T-cell (primary cell): ENCODE measurements at regions of chr14 and their contacts with region 1.

Region 1: DNA sequence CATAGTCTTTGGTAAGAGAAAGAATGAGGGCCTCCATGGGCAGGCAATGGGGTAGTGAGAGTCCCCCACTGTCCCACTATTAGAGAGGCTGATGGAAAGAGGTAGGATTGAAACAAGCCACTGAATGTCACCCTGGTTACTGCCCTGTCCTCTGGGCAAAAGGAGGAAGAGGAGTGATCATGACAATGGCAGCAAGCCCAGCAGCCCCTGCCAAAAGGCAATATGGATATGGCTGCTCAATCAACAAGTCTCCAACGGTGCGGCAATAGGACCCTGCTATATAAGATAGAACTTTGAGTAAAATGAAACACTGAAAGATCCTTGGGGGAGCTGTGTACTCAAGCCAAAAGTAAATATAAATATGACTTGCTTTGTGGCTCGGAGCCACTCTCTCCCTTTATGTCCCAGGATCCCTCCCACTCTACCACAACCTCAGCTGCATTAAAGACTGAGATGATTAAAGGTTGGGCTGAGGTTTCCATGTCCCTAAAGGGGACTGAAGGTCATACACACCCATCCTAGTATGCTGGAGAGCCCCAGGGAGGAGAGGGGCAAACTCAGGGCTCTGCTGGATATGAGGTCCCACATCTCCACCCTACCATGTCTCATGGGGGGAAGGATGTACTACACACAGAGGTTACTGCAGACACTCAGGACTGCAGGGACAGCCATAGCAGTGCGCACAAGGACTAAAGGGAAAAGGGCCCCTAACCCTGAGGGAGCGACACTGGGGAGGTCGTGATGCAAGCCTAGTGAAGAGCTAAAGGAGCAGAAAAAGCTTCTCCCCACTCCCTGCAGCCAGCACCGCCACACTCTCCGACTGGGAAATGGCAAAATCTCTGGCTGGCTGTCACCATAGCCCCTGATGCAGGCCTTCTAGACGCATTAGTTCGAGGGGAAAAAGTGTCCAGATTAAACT is 5.9 kb downstream of the POMT2 start:
- DNase-seq: no peak
- ATAC-seq: no peak
- H3K4me3 ChIP-seq: no peak overlapping the region
- H3K4me3 Mint-ChIP-seq: no peak overlapping the region
- H3K27ac ChIP-seq: no peak overlapping the region
- H3K27ac Mint-ChIP-seq: no peak overlapping the region
- H3K4me1 ChIP-seq: no peaks in the 10 kb centered on the region
- H3K4me1 Mint-ChIP-seq: peaks cover 1 to 5% (median 4%) of the 10 kb centered on the region in 3 donors
- H3K27me3 ChIP-seq: no peaks in the 10 kb centered on the region
- H3K27me3 Mint-ChIP-seq: no peaks in the 10 kb centered on the region

Region 2: DNA sequence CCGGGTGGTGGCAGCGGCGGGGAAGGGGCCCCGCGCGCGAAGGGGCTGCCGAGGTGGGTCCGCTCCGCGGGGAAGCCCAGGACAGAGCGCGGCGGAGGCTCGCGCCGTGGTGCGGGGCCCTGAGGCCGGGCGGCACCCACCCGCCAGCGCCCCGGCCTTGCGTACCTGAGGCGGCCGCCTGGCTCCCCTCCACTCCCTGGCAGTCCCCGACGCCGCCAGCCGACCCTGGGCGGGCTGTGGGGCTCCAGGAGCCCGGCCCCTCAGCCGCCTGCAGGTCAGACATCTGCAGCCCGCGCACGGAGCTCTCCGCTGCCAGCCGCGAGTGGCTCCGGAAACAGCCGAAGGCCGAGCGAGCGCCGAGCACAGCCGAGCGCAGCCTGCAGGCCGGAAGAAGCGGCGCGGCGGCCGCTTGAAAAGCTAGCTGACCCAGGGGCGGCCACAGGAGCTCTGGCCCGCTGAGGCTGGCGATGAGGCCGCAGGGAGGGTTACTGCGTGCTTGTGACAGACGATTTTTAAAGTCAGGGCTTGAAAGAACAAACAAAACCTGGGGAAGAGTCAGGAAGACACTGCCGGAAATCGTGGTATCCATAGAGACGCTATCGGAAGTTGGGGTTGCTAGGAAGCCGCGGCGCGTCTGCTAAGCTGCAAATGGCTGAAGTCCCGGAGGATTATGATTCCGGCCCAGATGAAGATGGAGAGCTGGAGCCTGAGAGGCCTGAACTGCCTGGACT is 62.1 kb after region 1 on chr14 and contains the starts of genes SAMD15 and TMED8:
- CTCF ChIA-PET with region 1: interaction called, 4 to 12 read pairs
- POLR2A ChIA-PET with region 1: no interaction called
- DNase-seq: peak; percentile 69 to 91 (median 81)
- ATAC-seq: peak; percentile 96 to 98 (median 98)
- H3K4me3 ChIP-seq: peak within 1 kb of the TSS; percentile 95 to 98
- H3K4me3 Mint-ChIP-seq: peak within 1 kb of the TSS in 2 of 3 donors; percentile 78 to 84
- H3K27ac ChIP-seq: peak within 1 kb of the TSS; percentile 49
- H3K27ac Mint-ChIP-seq: peak within 1 kb of the TSS; percentile 62 to 75
- H3K4me1 ChIP-seq: peaks cover 8 to 17% of the 10 kb centered on the region in 2 experiments
- H3K4me1 Mint-ChIP-seq: peaks cover 34 to 42% (median 40%) of the 10 kb centered on the region in 3 donors
- H3K27me3 ChIP-seq: no peaks in the 10 kb centered on the region
- H3K27me3 Mint-ChIP-seq: no peaks in the 10 kb centered on the region
- total RNA-seq, gene SAMD15: 0.15 to 0.75 (median 0.33) TPM in 4 of 5 donors, not detected in the other
- total RNA-seq, gene TMED8: 6.6 to 8.9 (median 7.5) TPM